Panc1 (cell line): ENCODE measurements at regions of chr5 and their contacts with region 1.

Region 1: DNA sequence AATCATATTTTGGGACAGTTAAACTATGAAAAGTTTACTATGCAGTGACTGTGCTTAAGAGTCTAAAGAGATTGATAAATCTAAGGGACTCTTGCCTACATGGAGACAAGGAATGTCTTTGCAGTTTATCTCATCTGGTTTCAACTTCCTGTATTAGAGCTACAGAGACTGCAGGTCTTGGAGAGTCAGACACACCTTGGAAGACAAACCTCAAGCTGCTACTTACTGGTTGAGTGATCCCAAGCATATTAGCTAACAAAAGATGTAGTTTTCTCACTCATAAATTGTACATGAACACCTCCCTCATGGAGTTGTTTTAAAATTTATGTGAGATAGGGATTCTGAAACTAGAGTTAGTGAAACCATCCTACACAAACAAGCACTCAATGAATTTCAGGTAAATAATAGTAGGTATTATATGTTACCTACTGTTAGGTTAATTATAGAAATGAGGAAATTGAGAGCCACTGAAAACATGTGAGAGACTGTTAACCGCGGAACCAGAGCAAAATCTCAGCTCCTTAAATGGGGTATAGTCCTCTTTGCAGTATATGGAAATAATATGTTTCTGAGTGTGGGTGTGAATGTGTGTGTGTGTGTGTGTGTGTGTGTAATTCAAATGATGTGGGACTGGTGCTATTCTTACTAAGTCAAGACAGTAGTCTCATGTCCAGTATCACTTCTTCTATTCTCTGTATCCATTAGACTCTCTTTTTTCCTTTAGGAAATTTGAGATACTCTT is 752.1 kb downstream of the DTWD2 start:
- DNase-seq: no peak
- ATAC-seq: no peak
- H3K4me3 ChIP-seq: no peak overlapping the region
- H3K27ac ChIP-seq: no peak overlapping the region
- H3K4me1 ChIP-seq: no peaks in the 10 kb centered on the region
- H3K27me3 ChIP-seq: no peaks in the 10 kb centered on the region
- CTCF ChIP-seq: no peak

Region 2: DNA sequence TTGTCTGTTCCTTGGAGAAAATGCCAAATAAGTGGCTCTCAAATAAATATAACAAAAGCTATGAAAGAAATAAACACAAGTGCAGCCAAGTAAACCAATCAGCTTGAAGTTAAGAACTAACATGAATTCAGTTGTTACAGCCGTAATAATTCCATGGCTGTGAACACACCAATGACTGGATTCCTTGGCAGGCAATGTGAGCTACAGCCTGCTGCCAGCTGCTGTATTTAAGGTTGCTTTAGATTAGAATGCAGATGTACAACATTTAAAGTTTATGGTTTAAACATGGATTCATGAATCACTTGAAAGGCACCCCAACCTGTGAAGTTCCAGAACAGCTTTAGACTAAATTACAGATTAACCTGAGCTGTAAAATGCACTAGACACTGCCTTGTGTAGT is 1035.3 kb before region 1 on chr5:
- CTCF ChIA-PET with region 1: no interaction called
- POLR2A ChIA-PET with region 1: interaction called, 16 read pairs
- in situ Hi-C with region 1: no loop called
- intact Hi-C with region 1: no loop called
- DNase-seq: no peak
- ATAC-seq: no peak
- H3K4me3 ChIP-seq: no peak overlapping the region
- H3K27ac ChIP-seq: no peak overlapping the region
- H3K4me1 ChIP-seq: no peaks in the 10 kb centered on the region
- H3K27me3 ChIP-seq: no peaks in the 10 kb centered on the region
- CTCF ChIP-seq: no peak

Region 3: DNA sequence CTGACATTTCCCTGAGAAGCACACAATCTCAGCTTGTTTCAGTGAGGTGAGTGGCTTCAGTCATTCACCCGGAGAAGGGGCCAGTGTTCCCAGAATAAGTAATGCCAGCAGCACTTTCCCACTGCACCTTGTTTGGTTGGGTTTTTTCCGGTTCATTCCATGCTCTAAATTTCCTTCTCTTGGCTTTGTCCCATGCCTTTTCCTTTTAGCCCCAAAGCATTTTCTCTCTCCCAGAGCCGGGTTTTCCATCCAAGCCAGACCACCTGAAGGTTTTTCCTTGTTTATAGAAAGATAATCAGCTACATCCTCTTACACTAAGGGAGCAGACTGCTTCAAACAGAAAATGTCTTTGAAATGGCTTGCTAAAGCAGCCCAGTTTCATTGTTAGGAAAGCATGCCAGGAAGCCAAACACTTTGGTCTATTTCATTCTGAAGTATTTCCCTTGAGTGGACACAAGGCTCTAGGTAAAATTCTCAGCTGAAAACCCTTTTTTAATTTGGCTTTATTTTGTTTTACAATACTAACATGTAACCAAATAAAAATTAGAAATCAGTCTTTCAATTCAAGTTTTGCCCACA is 250.5 kb after region 1 on chr5:
- CTCF ChIA-PET with region 1: no interaction called
- POLR2A ChIA-PET with region 1: no interaction called
- in situ Hi-C with region 1: no loop called
- intact Hi-C with region 1: no loop called
- DNase-seq: no peak
- ATAC-seq: no peak
- H3K4me3 ChIP-seq: no peak overlapping the region
- H3K27ac ChIP-seq: no peak overlapping the region
- H3K4me1 ChIP-seq: no peaks in the 10 kb centered on the region
- H3K27me3 ChIP-seq: no peaks in the 10 kb centered on the region
- CTCF ChIP-seq: no peak